ENCODE measurements at regions of chr19 and their contacts with region 1.

Region 1: GRCh38 chr19:20414127-20414526 is 151.5 kb downstream of the ZNF737 start:
- DNase-seq: no peak
- ATAC-seq: no peak

Region 2: GRCh38 chr19:20351244-20351643 is 62.9 kb before region 1 on chr19:
- intact Hi-C with region 1: no loop called
- DNase-seq: no peak
- ATAC-seq: no peak

Region 3: DNA sequence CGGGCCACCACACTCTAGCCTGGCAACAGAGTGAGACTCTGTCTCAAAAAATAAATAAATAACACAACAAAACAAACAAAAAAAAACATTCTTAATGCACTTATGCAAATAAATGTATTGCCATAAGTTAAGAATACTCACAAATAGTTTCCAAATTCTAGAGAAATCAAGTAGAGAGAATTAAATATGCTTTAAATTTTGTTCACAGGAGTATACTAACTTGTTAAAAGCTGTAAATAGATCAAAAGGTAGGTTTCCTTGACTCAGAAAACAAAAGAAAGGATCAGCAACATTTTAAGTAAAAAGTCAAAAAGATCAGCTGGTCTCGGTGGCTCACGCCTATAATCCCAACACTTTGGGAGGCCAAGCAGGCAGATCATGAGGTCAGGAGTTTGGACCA is 1040.8 kb after region 1 on chr19:
- intact Hi-C with region 1: loop called (anchors 5 kb)
- DNase-seq: no peak
- ATAC-seq: no peak